Activated naive CD4-positive, alpha-beta T cell treated with anti-CD3 and anti-CD28 coated beads for 36 hours (primary cell): ENCODE measurements at regions of chr1 and their contacts with region 1.

Region 1: DNA sequence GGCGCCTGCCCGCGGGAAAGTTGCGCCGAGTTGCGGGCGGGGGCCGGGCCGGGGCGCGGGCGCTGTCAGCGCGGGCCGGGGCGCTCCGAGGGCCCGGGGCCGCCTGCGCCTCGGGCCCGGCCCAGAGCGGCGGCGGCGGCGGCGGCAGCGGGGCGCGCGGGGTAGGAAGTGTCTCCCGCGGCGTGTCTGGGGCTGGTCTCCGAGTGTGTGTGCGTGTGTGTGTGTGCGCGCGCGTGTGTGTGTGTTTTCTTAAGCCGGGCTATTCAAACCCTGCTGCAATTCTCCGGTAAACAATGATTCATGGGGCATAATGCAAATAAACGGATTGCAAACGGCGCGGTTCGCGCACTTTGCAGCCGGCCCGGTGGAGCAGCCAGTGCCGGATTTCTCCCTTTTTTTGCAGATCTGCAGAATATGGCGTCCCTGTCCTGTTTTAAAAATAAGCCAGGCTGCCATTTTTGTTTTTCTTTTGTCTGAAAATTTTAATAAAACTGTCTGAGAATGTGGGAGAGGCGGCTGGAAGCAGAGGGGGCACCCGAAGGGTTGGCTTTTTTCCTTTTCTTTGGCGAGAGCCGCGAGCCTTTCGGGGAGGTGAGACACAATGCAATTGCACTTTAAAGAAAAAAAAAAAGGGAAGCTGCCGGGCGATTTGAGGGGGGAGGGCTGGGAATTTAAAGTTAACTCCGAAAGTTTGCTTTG is 558 bp downstream of the ZNF362 start:
- DNase-seq: peak; percentile 54
- H3K4me3 Mint-ChIP-seq: peak overlapping the region; percentile 96
- H3K27ac Mint-ChIP-seq: peak overlapping the region; percentile 91
- H3K4me1 Mint-ChIP-seq: peaks cover 35% of the 10 kb centered on the region
- H3K27me3 Mint-ChIP-seq: no peaks in the 10 kb centered on the region

Region 2: GRCh38 chr1:32501865-32502264 is 755.0 kb before region 1 on chr1:
- CTCF ChIA-PET with region 1: no interaction called
- intact Hi-C with region 1: no loop called
- DNase-seq: no peak
- H3K4me3 Mint-ChIP-seq: peak overlapping the region; percentile 47
- H3K27ac Mint-ChIP-seq: no peak overlapping the region
- H3K4me1 Mint-ChIP-seq: peaks cover 5% of the 10 kb centered on the region
- H3K27me3 Mint-ChIP-seq: peaks cover 36% of the 10 kb centered on the region

Region 3: DNA sequence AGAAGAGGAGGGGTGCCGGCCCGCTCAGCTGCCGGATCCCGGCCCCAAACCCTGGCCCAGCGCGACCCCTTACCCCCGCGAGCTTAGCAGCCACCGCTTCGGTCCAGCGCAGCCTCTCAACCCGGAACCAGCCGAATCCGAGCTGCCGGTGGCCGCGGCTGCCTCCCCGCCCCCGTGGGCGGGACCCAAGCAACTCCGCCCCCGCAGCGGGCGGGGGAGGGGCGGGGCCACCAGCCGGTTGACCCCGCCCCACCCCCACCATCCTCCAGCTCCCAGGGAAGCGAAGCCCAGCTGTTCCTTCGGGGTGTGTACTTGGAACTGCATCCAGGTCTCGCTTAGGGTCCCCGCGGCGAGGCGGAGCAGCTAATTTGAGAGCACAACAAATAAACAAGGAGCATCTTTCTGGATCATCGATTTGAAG is 74.9 kb before region 1 on chr1 and contains the start of gene TRIM62:
- CTCF ChIA-PET with region 1: no interaction called
- intact Hi-C with region 1: loop called (anchors 5 kb)
- DNase-seq: peak; percentile 69
- H3K4me3 Mint-ChIP-seq: peak within 1 kb of the TSS; percentile 86
- H3K27ac Mint-ChIP-seq: no peak within 1 kb of the TSS
- H3K4me1 Mint-ChIP-seq: peaks cover 10% of the 10 kb centered on the region
- H3K27me3 Mint-ChIP-seq: no peaks in the 10 kb centered on the region
- total RNA-seq, gene TRIM62: 1.5 TPM

Region 4: GRCh38 chr1:33349778-33350610 is 93.1 kb after region 1 on chr1:
- CTCF ChIA-PET with region 1: no interaction called
- intact Hi-C with region 1: loop called (anchors 5 kb)
- DNase-seq: peak; percentile 76
- H3K4me3 Mint-ChIP-seq: peak overlapping the region; percentile 89
- H3K27ac Mint-ChIP-seq: peak overlapping the region; percentile 84
- H3K4me1 Mint-ChIP-seq: peaks cover 45% of the 10 kb centered on the region
- H3K27me3 Mint-ChIP-seq: no peaks in the 10 kb centered on the region

Region 5: DNA sequence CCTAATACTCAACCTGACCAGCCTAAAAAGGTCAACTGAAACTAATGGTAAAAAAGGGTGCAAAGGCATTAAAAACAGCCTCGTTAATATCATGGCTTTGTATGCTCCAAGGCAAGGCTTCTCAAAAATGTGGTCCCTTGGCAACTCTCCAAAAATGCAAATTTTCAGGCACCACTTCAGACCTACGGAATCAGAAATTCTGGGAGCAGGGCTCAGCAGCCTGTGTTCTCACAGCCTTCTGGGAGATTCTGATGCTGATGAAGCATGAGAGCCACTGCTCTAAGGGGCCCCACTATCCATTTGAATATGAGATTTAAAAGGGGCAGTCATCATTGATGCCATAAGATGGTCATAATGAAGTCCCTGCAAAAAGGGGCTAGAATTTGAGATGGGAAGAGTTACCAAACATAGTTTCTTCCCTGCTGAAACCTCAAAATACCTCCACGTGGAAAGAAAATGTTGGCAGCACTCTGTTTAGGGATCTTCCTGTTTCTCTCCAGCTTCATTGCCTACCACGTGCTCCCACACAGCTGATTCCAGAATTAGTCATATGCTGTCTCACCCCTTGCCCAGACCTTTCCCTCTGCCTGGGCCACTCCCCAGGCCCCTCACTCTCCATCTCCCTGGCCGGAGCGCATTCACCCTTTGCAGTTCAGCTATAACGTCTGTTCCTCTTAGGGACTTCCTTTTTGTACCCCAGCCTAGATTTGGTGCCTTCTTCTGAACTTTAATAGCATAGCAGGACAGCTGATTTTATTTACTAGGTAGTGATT is 127.4 kb after region 1 on chr1:
- CTCF ChIA-PET with region 1: no interaction called
- intact Hi-C with region 1: no loop called
- DNase-seq: no peak
- H3K4me3 Mint-ChIP-seq: no peak overlapping the region
- H3K27ac Mint-ChIP-seq: no peak overlapping the region
- H3K4me1 Mint-ChIP-seq: peaks cover 13% of the 10 kb centered on the region
- H3K27me3 Mint-ChIP-seq: peaks cover 5% of the 10 kb centered on the region